Sciatic nerve (tissue), 2 donors: ENCODE measurements at regions of chrX and their contacts with region 1.

Region 1: DNA sequence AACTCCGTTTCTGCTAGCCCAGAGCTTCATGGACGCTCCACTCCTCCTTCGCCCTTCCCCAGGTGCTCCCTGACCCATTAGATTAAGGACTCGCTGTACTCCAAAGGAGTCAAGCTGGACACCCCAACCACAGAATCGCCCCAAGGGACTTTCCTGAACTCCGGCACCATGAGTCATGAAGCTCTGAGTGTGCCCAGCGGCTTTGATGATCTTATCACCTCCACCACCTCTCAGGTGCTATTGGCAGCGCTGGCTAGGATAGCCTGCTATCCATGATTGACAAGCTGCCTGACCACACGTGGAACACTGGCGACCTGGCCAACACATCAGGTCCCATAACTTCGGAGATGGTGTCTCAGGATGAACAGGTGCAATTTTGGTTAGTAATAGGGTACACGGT is 201.2 kb downstream of the EDA2R start:
- DNase-seq: no peak
- ATAC-seq: no peak

Region 2: DNA sequence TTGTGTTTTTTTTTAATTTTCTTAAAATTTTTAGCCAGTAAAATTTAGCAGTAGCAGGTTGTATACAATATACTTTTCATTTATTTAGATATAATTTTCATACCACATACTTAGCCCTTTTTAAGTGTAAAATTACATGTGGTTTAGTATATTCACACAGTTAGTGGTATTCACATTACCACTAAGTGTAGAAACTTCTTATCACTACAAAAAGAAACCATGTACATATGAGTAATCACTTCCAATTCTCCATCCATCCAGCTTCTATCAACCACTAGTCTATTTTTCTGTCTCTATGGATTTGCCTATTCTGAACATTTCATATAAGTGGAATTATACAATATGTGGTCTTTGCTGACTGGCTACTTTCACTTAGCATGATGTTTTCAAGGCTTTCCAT is 1570.5 kb before region 1 on chrX:
- intact Hi-C with region 1: loop called (anchors 5 kb)
- DNase-seq: no peak
- ATAC-seq: no peak

Region 3: GRCh38 chrX:65658229-65658628 is 779.5 kb before region 1 on chrX:
- intact Hi-C with region 1: no loop called
- DNase-seq: no peak
- ATAC-seq: no peak